A673 (cell line): ENCODE measurements at regions of chr3 and their contacts with region 1.

Region 1: DNA sequence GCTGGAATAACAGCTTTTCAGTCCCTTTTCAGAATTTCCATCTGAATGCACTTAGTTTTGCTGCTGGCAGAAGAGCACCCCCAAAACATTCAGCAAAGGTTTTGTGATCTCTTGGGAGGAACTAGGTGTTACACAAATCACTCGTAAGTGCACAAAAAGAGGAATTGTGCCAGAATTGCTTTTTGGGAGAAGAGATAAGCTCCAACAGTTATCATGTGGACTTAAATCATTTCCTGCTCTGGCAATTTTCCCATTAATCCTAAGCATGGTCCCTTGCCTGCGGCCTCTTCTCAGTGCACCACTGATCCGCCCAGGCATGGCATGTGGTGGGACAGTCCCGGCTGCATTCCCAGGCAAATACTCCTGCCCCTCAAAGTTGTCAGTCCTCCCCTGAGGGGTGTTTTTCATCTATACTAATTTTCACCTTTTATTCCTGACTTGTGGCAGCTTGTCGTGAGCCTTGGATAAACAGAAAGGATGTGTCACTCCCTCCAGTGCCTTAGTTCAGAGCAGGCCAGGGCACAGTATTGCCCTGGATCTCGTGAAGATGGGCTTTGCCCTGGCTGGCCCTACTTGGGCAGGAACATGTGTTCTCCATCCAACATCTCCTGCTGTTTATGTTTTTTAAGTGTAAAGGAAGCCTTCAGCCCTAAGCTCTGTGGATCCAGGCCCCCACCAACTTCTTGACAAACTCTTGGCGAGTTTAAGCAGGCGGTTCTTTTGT is 44.6 kb upstream of the VILL start:
- DNase-seq: peak; percentile 87
- H3K4me3 ChIP-seq: no peak overlapping the region
- H3K27ac ChIP-seq: peak overlapping the region; percentile 67
- H3K4me1 ChIP-seq: peaks cover 49% of the 10 kb centered on the region
- H3K27me3 ChIP-seq: no peaks in the 10 kb centered on the region
- CTCF ChIP-seq: no peak

Region 2: GRCh38 chr3:37980462-37981348 is 34.7 kb after region 1 on chr3:
- CTCF ChIA-PET with region 1: no interaction called
- POLR2A ChIA-PET with region 1: interaction called, 10 read pairs
- intact Hi-C with region 1: no loop called
- DNase-seq: no peak
- H3K4me3 ChIP-seq: no peak overlapping the region
- H3K27ac ChIP-seq: no peak overlapping the region
- H3K4me1 ChIP-seq: no peaks in the 10 kb centered on the region
- H3K27me3 ChIP-seq: no peaks in the 10 kb centered on the region
- CTCF ChIP-seq: no peak